A549 (cell line): ENCODE measurements at regions of chr20 and their contacts with region 1.

Region 1: GRCh38 chr20:45044084-45044573 is 56.8 kb downstream of the KCNS1 start:
- DNase-seq: peak; percentile 39 to 75
- ATAC-seq: peak; percentile 82 to 87
- H3K4me3 ChIP-seq: no peak overlapping the region
- H3K27ac ChIP-seq: no peak overlapping the region
- H3K4me1 ChIP-seq: peaks cover 24% of the 10 kb centered on the region
- CTCF ChIP-seq: peak; percentile 87
- EP300 ChIP-seq: no peak
- POLR2A ChIP-seq: no peak
- RAD21 ChIP-seq: peak; percentile 82 to 86

Region 2: GRCh38 chr20:44302026-44302669 is 742.0 kb before region 1 on chr20:
- CTCF ChIA-PET with region 1: no interaction called
- POLR2A ChIA-PET with region 1: no interaction called
- DNase-seq: peak in 1 of 2 experiments; percentile 54
- ATAC-seq: peak; percentile 24 to 72; a peak in 4 of 6 replicates
- H3K4me3 ChIP-seq: no peak overlapping the region
- H3K27ac ChIP-seq: peak overlapping the region; percentile 4 to 63; a peak in 5 of 6 replicates
- H3K4me1 ChIP-seq: peaks cover 14% of the 10 kb centered on the region; the same call in 2 of the 3 replicates
- CTCF ChIP-seq: no peak
- EP300 ChIP-seq: no peak
- POLR2A ChIP-seq: no peak
- RAD21 ChIP-seq: no peak

Region 3: DNA sequence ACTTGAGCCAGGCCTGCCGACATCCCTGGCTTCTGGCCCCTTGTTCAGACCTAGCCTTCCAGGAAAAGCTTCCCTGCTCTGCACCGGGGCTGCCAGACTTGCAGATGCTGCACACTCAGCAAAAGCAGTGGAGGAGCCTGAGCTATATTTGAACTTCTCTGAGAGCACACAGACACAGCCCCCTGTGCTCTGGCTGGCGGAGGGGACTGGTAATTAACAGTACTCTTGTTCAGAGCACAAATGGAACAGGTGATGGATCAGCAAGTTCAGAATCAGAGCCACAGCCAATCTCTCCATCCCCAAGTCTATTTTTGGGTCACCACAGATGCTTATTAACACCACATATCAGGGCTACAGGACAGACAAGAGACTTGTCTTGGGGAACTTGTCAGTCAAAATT is 206.2 kb before region 1 on chr20:
- CTCF ChIA-PET with region 1: no interaction called
- POLR2A ChIA-PET with region 1: no interaction called
- DNase-seq: no peak
- ATAC-seq: no peak
- H3K4me3 ChIP-seq: no peak overlapping the region
- H3K27ac ChIP-seq: no peak overlapping the region
- H3K4me1 ChIP-seq: no peaks in the 10 kb centered on the region
- CTCF ChIP-seq: no peak
- EP300 ChIP-seq: no peak
- POLR2A ChIP-seq: no peak
- RAD21 ChIP-seq: no peak

Region 4: GRCh38 chr20:44866703-44867335 is 177.3 kb before region 1 on chr20:
- CTCF ChIA-PET with region 1: no interaction called
- POLR2A ChIA-PET with region 1: no interaction called
- DNase-seq: no peak
- ATAC-seq: no peak
- H3K4me3 ChIP-seq: no peak overlapping the region
- H3K27ac ChIP-seq: peak overlapping the region in 1 of 2 experiments; percentile 36; a peak in 2 of 6 replicates
- H3K4me1 ChIP-seq: peaks cover 9% of the 10 kb centered on the region; the same call in 2 of the 3 replicates
- CTCF ChIP-seq: no peak
- EP300 ChIP-seq: no peak
- POLR2A ChIP-seq: no peak
- RAD21 ChIP-seq: no peak

Region 5: GRCh38 chr20:45011108-45011526 is 33.0 kb before region 1 on chr20:
- CTCF ChIA-PET with region 1: interaction called, 24 read pairs
- POLR2A ChIA-PET with region 1: no interaction called
- DNase-seq: peak; percentile 46 to 47
- ATAC-seq: peak; percentile 90 to 91
- H3K4me3 ChIP-seq: no peak overlapping the region
- H3K27ac ChIP-seq: no peak overlapping the region
- H3K4me1 ChIP-seq: peaks cover 12% of the 10 kb centered on the region
- CTCF ChIP-seq: peak; percentile 92
- EP300 ChIP-seq: no peak
- POLR2A ChIP-seq: no peak
- RAD21 ChIP-seq: peak; percentile 74 to 82

Region 6: DNA sequence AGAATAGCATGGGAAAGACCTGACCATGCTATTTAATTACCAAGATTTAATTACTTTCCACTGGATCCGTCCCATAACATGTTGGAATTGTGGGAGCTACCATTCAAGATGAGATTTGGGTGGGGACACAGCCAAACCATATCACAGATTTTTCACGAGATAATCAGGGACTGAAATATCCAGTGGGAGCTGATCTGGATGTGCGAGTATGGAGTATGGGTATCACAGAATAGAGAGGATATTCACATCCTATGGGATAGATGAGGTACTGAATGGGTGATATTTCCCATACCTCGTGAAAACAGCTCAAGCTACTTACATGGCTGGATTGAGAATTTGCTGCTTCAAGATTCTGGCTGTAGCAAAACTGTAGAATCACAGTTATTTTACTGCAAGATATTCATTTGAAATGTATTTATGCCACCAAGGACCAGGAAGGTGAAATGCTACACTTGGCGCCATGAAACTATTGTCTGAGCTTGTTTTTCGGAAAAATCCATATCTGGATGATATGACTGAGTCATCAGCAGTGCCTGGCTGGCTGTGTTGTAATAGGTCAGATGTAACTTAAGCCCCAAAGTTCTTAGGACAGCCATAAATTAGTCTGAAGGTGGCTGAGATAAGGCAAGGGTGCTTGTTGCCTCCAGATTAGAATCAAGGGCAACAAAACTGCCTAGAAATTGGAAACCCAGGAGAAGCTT is 27.0 kb after region 1 on chr20:
- CTCF ChIA-PET with region 1: interaction called, 21 read pairs
- POLR2A ChIA-PET with region 1: no interaction called
- DNase-seq: no peak
- ATAC-seq: no peak
- H3K4me3 ChIP-seq: no peak overlapping the region
- H3K27ac ChIP-seq: no peak overlapping the region
- H3K4me1 ChIP-seq: peaks cover 6% of the 10 kb centered on the region; the same call in 1 of the 3 replicates
- CTCF ChIP-seq: no peak
- EP300 ChIP-seq: no peak
- POLR2A ChIP-seq: no peak
- RAD21 ChIP-seq: no peak

Region 7: GRCh38 chr20:45104786-45105185 is 60.7 kb after region 1 on chr20:
- CTCF ChIA-PET with region 1: interaction called, 98 read pairs
- POLR2A ChIA-PET with region 1: no interaction called
- DNase-seq: no peak
- ATAC-seq: no peak
- H3K4me3 ChIP-seq: no peak overlapping the region
- H3K27ac ChIP-seq: no peak overlapping the region
- H3K4me1 ChIP-seq: no peaks in the 10 kb centered on the region
- CTCF ChIP-seq: no peak
- EP300 ChIP-seq: no peak
- POLR2A ChIP-seq: no peak
- RAD21 ChIP-seq: no peak

Region 8: DNA sequence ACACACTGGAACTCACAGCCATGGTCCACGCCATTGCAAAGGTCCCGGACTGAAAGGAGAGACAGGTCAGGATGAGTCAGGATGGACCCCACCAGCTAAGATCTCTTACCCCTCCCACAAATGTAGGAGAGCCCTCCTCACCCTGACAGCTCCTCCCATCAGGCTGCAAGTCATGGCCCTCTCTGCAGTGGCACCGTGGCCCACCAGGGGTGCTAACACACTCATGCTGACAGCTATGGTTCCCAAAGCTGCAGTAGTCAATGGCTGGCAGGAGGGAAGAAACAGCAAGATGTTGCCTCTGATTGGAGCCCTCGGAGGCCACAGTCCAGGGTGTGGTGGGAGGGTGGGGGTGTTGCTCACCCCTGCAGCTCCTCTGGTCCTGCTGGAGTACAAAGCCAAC is 256.8 kb after region 1 on chr20:
- CTCF ChIA-PET with region 1: interaction called, 17 read pairs
- POLR2A ChIA-PET with region 1: no interaction called
- DNase-seq: peak; percentile 69 to 71
- ATAC-seq: peak; percentile 86 to 99
- H3K4me3 ChIP-seq: no peak overlapping the region
- H3K27ac ChIP-seq: no peak overlapping the region
- H3K4me1 ChIP-seq: no peaks in the 10 kb centered on the region
- CTCF ChIP-seq: no peak
- EP300 ChIP-seq: no peak
- POLR2A ChIP-seq: no peak
- RAD21 ChIP-seq: no peak